CD8-positive, alpha-beta T cell (primary cell): ENCODE measurements at regions of chr13 and their contacts with region 1.

Region 1: DNA sequence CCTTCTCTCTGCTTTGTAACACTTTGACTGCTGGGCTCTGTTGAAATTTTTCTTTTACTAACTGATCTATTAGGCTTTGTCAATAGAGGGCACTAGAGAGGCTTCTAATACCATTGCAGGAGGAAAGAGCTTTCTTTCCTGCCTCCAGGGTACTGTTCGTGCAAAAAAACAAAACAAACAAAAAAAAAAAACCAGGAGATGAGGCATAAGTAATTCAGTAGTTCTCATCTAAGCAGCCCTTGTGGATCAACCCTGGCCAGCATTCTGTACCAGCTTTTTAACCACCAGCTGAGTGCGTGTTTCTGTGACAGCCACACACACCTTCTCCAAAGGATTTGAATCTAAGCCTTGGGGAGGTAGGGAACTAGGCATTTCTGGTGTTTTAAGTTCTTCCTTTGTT is 1707.6 kb upstream of the SLC10A2 start:
- DNase-seq: peak in 2 of 9 experiments; percentile 15 to 45
- ATAC-seq: no peak
- H3K4me3 ChIP-seq: no peak overlapping the region
- H3K4me3 Mint-ChIP-seq: no peak overlapping the region
- H3K27ac ChIP-seq: no peak overlapping the region
- H3K27ac Mint-ChIP-seq: no peak overlapping the region
- H3K4me1 ChIP-seq: peaks cover 11% of the 10 kb centered on the region
- H3K4me1 Mint-ChIP-seq: peaks cover 14% of the 10 kb centered on the region
- H3K27me3 ChIP-seq: no peaks in the 10 kb centered on the region
- H3K27me3 Mint-ChIP-seq: no peaks in the 10 kb centered on the region
- CTCF ChIP-seq: peak; percentile 56

Region 2: GRCh38 chr13:104657196-104657595 is 116.6 kb before region 1 on chr13:
- CTCF ChIA-PET with region 1: no interaction called
- POLR2A ChIA-PET with region 1: no interaction called
- intact Hi-C with region 1: no loop called
- DNase-seq: no peak
- ATAC-seq: no peak
- H3K4me3 ChIP-seq: no peak overlapping the region
- H3K4me3 Mint-ChIP-seq: no peak overlapping the region
- H3K27ac ChIP-seq: no peak overlapping the region
- H3K27ac Mint-ChIP-seq: no peak overlapping the region
- H3K4me1 ChIP-seq: no peaks in the 10 kb centered on the region
- H3K4me1 Mint-ChIP-seq: no peaks in the 10 kb centered on the region
- H3K27me3 ChIP-seq: no peaks in the 10 kb centered on the region
- H3K27me3 Mint-ChIP-seq: no peaks in the 10 kb centered on the region
- CTCF ChIP-seq: no peak

Region 3: DNA sequence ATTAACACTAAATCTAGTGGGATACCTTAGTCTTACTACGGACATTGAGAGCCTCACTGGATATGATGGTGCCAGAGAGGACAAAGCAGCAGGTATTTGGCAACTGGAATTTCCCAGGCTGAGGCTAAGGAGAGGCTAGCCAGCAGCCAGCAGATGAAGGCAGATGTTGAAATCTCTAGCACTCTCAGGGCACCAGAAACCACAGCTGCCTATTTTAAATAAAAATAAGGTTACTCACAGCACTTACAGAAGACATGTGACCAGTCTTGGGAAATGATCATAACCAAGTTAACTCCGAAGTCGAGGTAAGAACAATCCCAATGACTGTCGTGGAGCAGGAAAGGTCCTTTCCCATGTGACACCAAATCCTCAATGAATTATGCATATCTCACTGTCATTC is 35.7 kb after region 1 on chr13:
- CTCF ChIA-PET with region 1: no interaction called
- POLR2A ChIA-PET with region 1: no interaction called
- intact Hi-C with region 1: no loop called
- DNase-seq: no peak
- ATAC-seq: no peak
- H3K4me3 ChIP-seq: no peak overlapping the region
- H3K4me3 Mint-ChIP-seq: no peak overlapping the region
- H3K27ac ChIP-seq: no peak overlapping the region
- H3K27ac Mint-ChIP-seq: no peak overlapping the region
- H3K4me1 ChIP-seq: peaks cover 20% of the 10 kb centered on the region
- H3K4me1 Mint-ChIP-seq: peaks cover 26% of the 10 kb centered on the region
- H3K27me3 ChIP-seq: no peaks in the 10 kb centered on the region
- H3K27me3 Mint-ChIP-seq: no peaks in the 10 kb centered on the region
- CTCF ChIP-seq: no peak

Region 4: DNA sequence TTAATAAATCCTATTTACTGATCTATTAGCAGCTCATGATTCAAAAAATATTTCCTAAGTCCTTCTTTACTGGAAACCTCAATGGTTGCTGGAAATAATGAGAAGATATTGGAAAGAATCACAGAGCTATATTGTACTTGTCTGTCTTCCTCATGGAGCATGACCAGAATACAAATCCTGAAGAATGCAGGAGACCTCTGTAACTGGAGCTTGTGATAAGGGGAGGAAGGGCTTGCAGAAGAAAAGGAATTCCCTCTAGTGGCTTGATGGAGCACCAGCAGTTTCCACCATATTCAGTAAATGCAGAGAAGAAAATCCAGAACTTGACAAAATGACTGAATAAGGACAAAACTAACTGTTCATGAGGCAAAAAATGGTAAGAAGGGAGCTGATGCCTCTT is 428.6 kb after region 1 on chr13:
- CTCF ChIA-PET with region 1: interaction called, 4 read pairs
- POLR2A ChIA-PET with region 1: no interaction called
- intact Hi-C with region 1: loop called (anchors 5 to 10 kb)
- DNase-seq: peak in 2 of 9 experiments; percentile 4 to 14
- ATAC-seq: no peak
- H3K4me3 ChIP-seq: no peak overlapping the region
- H3K4me3 Mint-ChIP-seq: no peak overlapping the region
- H3K27ac ChIP-seq: no peak overlapping the region
- H3K27ac Mint-ChIP-seq: no peak overlapping the region
- H3K4me1 ChIP-seq: no peaks in the 10 kb centered on the region
- H3K4me1 Mint-ChIP-seq: no peaks in the 10 kb centered on the region
- H3K27me3 ChIP-seq: no peaks in the 10 kb centered on the region
- H3K27me3 Mint-ChIP-seq: peaks cover 7% of the 10 kb centered on the region
- CTCF ChIP-seq: no peak